Mammary epithelial cell (primary cell): ENCODE measurements at regions of chr12 and their contacts with region 1.

Region 1: GRCh38 chr12:55996715-55997534 is at the start of gene SUOX:
- DNase-seq: peak; percentile 96
- H3K4me3 ChIP-seq: peak within 1 kb of the TSS; percentile 67 to 82 (median 75)
- H3K27ac ChIP-seq: peak within 1 kb of the TSS; percentile 63
- H3K4me1 ChIP-seq: peaks cover 11% of the 10 kb centered on the region
- H3K27me3 ChIP-seq: no peaks in the 10 kb centered on the region
- CTCF ChIP-seq: no peak
- total RNA-seq, gene SUOX: 10.7 to 14.7 TPM

Region 2: DNA sequence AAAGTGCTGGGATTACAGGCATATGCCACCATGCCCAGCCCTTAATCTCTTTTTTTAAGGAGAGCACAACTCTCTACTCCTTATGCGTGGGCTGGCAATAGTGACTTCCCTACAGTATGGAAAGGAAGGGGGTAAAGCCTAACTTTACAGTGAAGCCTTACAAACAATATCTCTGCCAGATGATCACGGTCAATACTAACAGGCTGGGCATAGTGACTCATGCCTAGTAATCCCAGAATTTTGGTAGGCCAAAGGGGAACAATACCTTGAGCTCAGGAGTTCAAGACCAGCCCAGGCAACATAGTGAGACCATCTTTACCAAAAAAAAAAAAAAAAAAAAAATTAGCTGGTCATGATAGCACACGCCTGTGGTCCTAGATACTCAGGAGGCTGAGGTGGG is 74.8 kb before region 1 on chr12:
- CTCF ChIA-PET with region 1: no interaction called
- dilution Hi-C with region 1: no loop called
- in situ Hi-C with region 1: no loop called
- intact Hi-C with region 1: no loop called
- DNase-seq: no peak
- H3K4me3 ChIP-seq: no peak overlapping the region
- H3K27ac ChIP-seq: no peak overlapping the region
- H3K4me1 ChIP-seq: peaks cover 7% of the 10 kb centered on the region
- H3K27me3 ChIP-seq: no peaks in the 10 kb centered on the region
- CTCF ChIP-seq: no peak

Region 3: GRCh38 chr12:56041552-56042429 is 44.9 kb after region 1 on chr12 and contains the start of gene RPS26:
- CTCF ChIA-PET with region 1: interaction called, 4 read pairs
- dilution Hi-C with region 1: loop called (anchors 5 kb)
- in situ Hi-C with region 1: no loop called
- intact Hi-C with region 1: loop called (anchors 1 kb)
- DNase-seq: peak; percentile 99
- H3K4me3 ChIP-seq: peak within 1 kb of the TSS; percentile 78 to 91 (median 86)
- H3K27ac ChIP-seq: peak within 1 kb of the TSS; percentile 91
- H3K4me1 ChIP-seq: peaks cover 19% of the 10 kb centered on the region
- H3K27me3 ChIP-seq: no peaks in the 10 kb centered on the region
- CTCF ChIP-seq: peak; percentile 16 to 54
- total RNA-seq, gene RPS26: 46.4 to 331 TPM